Right ventricle myocardium inferior (tissue), 1 donor: ENCODE measurements at regions of chr4 and their contacts with region 1.

Region 1: GRCh38 chr4:76690011-76690905 is 207.7 kb downstream of the SOWAHB start:
- DNase-seq: no peak
- ATAC-seq: no peak

Region 2: GRCh38 chr4:76708971-76709771 is 18.9 kb after region 1 on chr4:
- intact Hi-C with region 1: loop called (anchors 2 kb)
- DNase-seq: no peak
- ATAC-seq: no peak

Region 3: DNA sequence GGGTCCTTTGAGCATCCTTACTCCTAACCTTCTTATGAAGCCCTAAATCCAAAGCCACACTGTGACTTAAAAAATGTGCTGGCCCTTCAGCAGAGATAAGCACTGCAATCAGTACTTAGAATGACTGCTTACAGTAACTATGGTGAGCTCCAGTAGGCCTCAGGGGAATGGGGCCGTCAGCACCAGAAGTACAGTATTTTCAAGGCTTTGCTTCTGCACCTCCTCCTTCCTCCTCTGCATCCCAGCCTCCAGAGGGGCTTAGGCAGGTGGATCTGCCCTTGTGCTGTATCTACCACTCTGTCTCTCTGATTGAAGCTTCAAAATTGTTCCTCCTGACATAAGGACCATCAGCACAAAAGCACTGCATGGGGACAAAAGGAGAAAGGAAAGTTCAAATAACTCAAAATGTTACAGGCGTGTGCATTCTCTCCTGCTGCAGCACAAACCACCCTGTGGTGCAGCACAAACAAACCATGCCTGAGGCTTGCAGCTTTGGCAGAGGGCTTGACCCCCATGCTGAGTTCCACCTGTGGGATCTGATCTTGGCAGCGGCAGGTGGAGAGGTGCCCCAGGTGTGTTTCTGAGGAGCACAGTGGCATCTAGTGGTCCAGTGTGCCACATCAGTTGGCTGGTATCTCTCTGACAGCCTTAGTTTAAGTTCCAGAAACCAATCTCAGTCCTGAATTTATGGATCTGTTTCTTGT is 43.0 kb after region 1 on chr4:
- intact Hi-C with region 1: no loop called
- DNase-seq: no peak
- ATAC-seq: no peak

Region 4: DNA sequence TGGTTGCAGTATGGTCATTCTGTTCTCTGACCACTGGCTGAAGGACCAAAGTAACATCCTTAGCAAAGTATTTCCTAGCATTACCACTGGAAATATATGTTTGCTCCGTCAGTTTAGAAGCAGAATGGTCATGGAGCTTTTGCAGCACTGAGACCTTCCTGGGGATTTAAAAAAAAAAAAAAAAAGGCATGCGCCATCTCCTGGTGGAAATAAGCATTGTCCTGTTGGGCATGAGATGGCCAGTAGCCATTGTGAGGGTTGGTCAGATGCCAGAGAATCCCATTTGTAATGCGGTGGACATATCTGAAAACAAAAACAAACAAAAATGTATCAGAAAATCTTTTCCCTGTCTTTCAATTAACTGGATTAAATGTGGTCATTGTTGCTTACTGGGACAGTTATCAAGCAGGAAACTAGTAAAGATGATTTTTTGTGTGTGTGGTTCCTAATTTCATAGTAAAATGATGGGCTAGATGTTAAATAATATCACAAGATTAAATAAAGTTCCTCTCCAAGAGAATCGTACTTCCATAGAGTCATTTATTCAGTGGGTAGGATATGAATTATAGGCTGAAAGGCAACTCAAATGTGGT is 68.1 kb after region 1 on chr4:
- intact Hi-C with region 1: loop called (anchors 5 kb)
- DNase-seq: no peak
- ATAC-seq: peak; percentile 55